Endothelial cell of umbilical vein (primary cell): ENCODE measurements at regions of chr19 and their contacts with region 1.

Region 1: DNA sequence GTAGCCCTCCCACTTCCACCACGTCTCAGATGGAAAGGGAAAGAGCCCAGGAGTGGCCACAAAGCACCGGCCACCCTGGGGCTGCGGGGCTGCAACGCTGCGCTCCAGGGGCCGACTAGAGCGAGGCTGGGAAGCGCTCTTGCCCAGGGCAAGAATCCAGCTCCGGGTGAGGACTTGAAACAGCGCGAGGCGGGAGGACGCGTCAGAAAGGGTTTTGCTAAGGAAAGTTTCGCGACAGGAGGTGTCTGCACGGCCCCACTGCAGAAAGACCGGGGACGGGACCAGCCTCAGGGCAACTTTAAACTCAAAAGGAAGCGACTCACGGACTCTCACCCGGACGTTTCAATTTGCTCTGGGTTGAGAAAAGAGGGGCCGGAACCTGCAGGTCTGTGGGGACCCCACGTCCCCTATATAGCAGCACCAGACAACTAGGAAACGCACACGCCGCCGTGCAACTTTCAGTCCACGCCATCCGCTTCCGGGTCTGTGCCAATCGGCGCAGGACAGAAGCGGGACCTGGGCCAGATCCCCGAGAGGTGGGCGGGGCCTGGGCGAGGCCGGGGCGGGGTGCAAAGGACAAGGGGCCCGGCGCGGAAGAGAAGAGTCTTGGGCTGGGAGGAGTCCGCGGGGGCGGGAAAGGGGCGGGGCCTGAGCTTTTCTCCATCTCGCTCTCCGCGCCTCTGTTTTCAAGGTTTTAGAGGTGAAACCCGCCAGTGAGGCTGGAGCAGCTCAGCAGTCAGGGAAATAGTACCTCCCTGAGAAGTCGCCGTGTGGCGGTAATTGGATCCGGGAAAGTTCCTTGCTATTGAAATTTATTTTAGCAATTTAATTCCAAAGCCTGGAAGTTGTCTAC is at the start of gene ZNF816:
- DNase-seq: peak; percentile 96
- H3K4me3 ChIP-seq: peak within 1 kb of the TSS; percentile 74 to 83 (median 77)
- H3K27ac ChIP-seq: peak within 1 kb of the TSS; percentile 56
- H3K4me1 ChIP-seq: peaks cover 4% of the 10 kb centered on the region
- H3K27me3 ChIP-seq: no peaks in the 10 kb centered on the region
- CTCF ChIP-seq: no peak
- POLR2A ChIP-seq: peak; percentile 87
- total RNA-seq, gene ZNF816: 4.9 and 5.3 TPM in 2 replicates

Region 2: DNA sequence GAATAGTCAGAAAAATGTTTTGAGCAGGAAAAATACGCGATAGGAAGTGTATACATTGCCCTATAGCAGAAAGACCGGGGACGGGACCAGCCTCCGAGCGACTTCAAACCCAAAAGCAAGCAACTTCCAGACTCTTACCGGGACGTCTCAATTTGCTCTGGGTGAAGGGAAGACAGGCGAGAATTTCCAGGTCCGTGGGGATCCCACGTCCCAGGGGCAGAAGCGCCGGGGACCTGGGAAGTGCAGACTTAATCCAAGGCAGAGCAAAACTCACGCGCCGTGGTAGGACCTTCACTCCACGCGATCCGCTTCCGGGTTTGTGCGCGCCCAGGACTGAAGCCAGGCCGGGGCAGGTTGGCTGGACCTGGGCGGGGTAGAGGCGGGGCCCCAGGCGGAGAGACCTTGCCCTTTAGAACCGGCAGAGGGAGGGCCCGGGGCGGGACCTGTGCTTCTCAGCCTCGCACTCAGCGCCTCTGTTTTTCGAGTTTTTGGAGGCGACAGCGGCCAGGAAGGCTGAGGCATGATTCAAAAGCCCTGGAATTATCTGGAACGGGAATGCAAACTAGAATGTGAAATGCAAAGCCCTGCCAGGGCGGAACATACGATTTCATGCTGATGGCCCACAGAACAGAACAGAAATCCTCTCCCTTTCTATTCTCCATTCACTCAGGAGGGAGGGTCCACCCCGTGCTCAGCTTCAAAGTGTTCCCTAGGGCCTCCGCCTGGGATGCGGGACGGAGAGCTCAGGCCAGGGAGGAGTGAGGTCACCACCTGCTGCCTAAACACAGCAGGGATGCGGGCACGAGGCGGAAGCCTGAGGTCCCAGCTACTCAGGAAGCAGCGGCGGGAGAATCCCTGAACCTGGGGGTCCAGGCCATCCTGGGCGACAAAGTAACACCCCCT is 175.9 kb before region 1 on chr19 and contains the start of gene ZNF600:
- CTCF ChIA-PET with region 1: no interaction called
- POLR2A ChIA-PET with region 1: no interaction called
- dilution Hi-C with region 1: no loop called
- intact Hi-C with region 1: loop called (anchors 2 kb)
- DNase-seq: peak; percentile 70
- H3K4me3 ChIP-seq: peak within 1 kb of the TSS; percentile 45 to 95 (median 88)
- H3K27ac ChIP-seq: no peak within 1 kb of the TSS
- H3K4me1 ChIP-seq: peaks cover 12% of the 10 kb centered on the region
- H3K27me3 ChIP-seq: no peaks in the 10 kb centered on the region
- CTCF ChIP-seq: peak in 1 of 2 donors; percentile 8
- POLR2A ChIP-seq: peak; percentile 68
- total RNA-seq, gene ZNF600: 5.2 and 7.9 TPM in 2 replicates

Region 3: GRCh38 chr19:53132141-53132991 is 169.7 kb after region 1 on chr19 and contains the start of gene ZNF415:
- CTCF ChIA-PET with region 1: no interaction called
- POLR2A ChIA-PET with region 1: no interaction called
- dilution Hi-C with region 1: no loop called
- intact Hi-C with region 1: no loop called
- DNase-seq: peak; percentile 35
- H3K4me3 ChIP-seq: peak within 1 kb of the TSS in 1 of 3 experiments; percentile 35
- H3K27ac ChIP-seq: no peak within 1 kb of the TSS
- H3K4me1 ChIP-seq: no peaks in the 10 kb centered on the region
- H3K27me3 ChIP-seq: no peaks in the 10 kb centered on the region
- CTCF ChIP-seq: no peak
- POLR2A ChIP-seq: no peak
- total RNA-seq, gene ZNF415: 0.69 TPM in 1 of 2 replicates, not detected in the other